Cardiac septum (tissue), 1 donor: ENCODE measurements at regions of chr1 and their contacts with region 1.

Region 1: DNA sequence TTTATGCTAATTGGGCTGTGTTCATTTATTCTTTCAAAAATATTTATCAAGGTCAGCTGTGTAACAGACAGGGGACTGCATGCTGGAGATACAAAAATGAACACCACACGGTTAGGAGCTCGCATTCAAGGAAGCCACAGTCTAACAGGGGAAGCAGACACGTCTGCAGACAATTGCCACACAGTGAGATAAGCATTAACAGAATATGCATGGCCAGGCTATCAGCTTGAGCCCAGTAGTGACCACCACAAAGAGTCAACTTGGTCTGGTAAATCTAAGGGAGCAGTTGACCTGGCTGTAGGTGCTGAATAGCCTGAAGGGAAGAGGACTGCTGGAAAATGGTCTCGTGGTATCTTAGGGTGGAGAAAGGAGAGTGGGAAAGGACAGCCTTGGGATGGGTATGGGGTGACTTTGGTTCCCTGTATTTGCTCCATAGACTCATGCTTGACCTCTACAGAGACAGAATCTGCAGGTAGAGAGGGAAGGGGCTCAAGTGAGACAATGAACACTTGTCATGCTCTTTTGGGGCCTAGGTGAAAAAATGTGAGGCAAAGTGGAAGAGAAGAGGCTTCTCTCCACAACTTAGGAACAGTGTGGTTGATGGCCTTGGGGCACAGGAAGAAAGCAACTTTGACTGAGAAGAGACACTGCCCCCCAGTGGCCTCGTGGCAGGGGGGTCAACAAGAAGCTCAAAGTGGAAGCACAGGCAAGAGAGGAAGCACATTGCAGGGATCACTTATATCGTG is 7.6 kb upstream of the NPL start:
- DNase-seq: peak; percentile 83

Region 2: GRCh38 chr1:182446033-182446669 is 335.9 kb before region 1 on chr1:
- intact Hi-C with region 1: loop called (anchors 5 kb)
- DNase-seq: no peak

Region 3: GRCh38 chr1:182604169-182605164 is 177.5 kb before region 1 on chr1 and contains the start of gene RGS16:
- intact Hi-C with region 1: loop called (anchors 1 kb)
- DNase-seq: peak; percentile 97
- total RNA-seq, gene RGS16: 1.9 TPM

Region 4: DNA sequence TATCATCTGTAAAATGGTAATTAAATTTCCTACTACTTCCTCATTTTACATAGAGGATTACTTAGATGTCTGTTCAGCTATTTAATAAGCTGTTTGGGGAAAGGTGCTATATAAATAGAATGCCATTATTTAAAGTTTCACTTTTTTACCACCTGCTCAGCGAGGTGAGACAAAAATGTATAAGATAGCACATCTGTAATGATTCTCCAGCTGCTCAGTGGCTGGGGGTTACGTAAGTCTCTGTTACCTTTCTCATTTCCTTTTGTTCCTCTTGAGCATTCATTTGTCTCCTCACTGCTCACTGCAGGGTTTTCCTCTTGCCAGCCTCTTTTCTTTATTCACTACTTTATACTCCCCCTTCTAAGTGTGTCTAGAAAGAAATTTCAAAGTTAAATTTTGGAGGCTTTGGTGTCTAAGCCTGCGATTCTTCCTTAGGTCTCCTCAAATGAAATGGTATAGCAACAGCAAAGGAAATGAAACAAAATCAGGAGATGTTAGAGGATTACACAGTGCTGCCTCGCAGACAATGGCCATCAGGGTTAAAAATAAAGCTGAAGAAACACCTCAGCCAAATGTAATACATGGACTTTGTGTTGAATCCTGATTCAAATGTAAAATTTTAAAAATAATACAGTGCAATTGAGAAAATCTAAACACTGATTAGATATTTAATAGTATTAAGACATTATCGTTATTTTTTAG is 104.5 kb before region 1 on chr1:
- intact Hi-C with region 1: loop called (anchors 5 kb)
- DNase-seq: no peak